ENCODE measurements at regions of chr2 and their contacts with region 1.

Region 1: DNA sequence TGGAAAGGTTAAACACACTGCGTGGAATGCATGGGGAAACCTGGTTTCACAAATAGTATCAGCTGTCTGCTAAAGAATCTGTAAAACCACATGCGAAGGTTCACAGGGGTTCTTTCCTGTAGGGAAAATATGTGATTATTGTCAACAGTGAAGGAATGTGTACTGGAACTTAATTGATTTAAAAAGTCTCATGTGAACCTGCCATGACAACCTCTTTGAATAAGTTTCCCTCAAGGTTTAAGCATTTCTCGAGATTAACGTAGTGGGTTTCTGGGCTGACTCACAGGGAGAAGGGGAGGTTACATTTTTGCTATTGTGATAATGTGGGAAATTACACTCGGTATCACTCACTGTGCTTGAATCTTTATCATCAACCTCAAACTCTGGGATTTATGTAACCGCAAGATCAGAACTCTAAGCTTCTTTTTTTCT is 28.2 kb upstream of the IL1R1 start:
- DNase-seq: peak; percentile 57
- H3K4me3 Mint-ChIP-seq: no peak overlapping the region
- H3K27ac Mint-ChIP-seq: peak overlapping the region; percentile 54
- H3K4me1 Mint-ChIP-seq: peaks cover 62% of the 10 kb centered on the region
- H3K27me3 Mint-ChIP-seq: no peaks in the 10 kb centered on the region

Region 2: DNA sequence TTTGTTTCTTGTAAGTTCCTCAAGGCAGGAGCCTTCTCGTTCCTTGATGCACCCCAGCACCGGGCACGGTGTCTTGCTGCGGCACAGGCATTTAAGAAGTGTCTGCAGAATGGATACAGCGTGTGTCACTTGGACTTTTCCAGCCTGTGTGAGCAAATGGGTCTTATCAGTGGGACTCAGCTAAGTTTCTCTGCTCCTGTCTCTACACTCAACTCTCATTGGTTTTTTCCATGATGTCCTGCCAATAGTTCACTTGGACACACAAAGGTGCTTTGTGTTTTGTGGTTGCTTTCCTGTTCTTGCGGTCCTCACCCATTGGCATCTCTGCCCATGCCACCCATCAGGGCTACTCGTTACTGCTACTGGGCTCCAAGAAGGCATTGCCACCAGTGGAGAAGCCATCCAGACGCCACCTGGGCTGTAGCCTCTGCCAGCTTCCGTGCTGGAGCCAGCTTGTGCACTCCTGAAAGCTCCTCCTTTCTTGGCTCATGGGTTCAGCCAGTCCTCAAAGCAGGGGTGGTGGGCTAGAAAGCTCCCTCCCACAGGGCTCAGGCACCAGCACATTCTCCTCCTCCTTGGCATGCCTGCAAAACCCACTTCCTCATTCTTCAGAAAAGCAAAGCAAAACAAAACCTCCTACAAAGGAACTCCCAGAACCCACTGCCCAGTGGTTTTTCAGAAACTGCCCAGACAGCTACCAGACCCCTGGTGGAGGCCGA is 81.1 kb before region 1 on chr2:
- CTCF ChIA-PET with region 1: no interaction called
- intact Hi-C with region 1: loop called (anchors 1 kb)
- DNase-seq: peak; percentile 22
- H3K4me3 Mint-ChIP-seq: no peak overlapping the region
- H3K27ac Mint-ChIP-seq: peak overlapping the region; percentile 48
- H3K4me1 Mint-ChIP-seq: peaks cover 40% of the 10 kb centered on the region
- H3K27me3 Mint-ChIP-seq: no peaks in the 10 kb centered on the region

Region 3: DNA sequence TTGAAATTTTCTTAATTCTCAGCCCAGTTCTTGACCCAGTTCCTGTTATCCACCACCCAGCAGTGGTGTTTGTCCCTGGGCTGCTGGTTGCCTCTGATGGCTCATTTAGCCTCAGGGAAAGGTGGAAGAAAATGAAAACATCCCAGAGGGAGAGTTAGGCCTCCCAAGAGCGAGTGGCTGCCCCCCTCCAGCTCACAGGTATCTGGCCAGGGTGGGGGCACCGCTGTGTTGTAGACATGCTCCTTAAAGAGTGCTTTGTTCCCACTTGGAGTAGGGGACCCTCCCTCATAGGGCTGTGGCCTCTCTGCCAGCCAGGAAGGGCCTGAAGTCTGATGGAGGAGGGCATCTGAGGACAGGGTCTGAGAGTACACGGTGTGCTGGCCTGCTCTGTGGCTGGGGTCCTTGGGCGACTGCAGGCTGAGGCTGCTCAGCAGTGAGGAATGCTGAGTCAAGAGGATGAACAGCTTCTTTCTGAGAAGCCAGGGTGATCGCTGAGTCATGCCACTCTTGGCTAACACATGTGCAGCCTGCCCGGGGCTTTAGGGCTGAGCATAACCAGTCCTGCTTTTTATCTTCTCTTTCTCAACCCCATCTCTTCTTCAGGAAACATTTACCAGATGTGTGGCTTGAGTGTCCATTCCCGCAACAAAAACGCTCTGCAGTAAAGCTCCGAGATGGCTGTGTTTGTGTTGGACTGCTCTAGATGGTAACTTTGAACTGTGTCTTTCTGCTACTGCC is 50.2 kb before region 1 on chr2:
- CTCF ChIA-PET with region 1: no interaction called
- intact Hi-C with region 1: loop called (anchors 1 kb)
- DNase-seq: peak; percentile 73
- H3K4me3 Mint-ChIP-seq: no peak overlapping the region
- H3K27ac Mint-ChIP-seq: peak overlapping the region; percentile 44
- H3K4me1 Mint-ChIP-seq: peaks cover 27% of the 10 kb centered on the region
- H3K27me3 Mint-ChIP-seq: no peaks in the 10 kb centered on the region

Region 4: GRCh38 chr2:102103992-102104871 is 10.1 kb before region 1 on chr2:
- CTCF ChIA-PET with region 1: no interaction called
- intact Hi-C with region 1: loop called (anchors 1 kb)
- DNase-seq: peak; percentile 96
- H3K4me3 Mint-ChIP-seq: peak overlapping the region; percentile 71
- H3K27ac Mint-ChIP-seq: peak overlapping the region; percentile 86
- H3K4me1 Mint-ChIP-seq: peaks cover 36% of the 10 kb centered on the region
- H3K27me3 Mint-ChIP-seq: peaks cover 2% of the 10 kb centered on the region

Region 5: DNA sequence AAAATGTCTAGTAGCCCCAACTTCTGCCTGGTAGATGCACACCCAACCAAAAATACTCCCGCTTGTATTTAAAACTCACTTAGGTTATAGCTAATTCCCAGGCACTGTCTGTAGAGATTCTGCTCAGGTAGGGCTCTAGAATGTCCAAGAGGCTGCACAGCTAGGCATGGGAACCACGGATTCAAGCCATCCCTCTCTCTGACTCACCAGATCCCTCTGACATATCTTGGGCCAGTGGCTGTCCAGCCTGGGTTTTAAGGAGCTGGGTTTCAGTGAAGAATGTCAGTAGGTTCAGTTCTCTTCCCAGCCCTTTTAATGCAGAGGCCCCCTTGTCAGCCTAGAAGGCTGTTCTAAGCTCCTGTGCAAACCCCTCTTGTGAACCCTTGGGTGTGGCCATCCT is 12.3 kb after region 1 on chr2:
- CTCF ChIA-PET with region 1: interaction called, 4 read pairs
- intact Hi-C with region 1: loop called (anchors 1 kb)
- DNase-seq: no peak
- H3K4me3 Mint-ChIP-seq: no peak overlapping the region
- H3K27ac Mint-ChIP-seq: peak overlapping the region; percentile 81
- H3K4me1 Mint-ChIP-seq: peaks cover 31% of the 10 kb centered on the region
- H3K27me3 Mint-ChIP-seq: peaks cover 3% of the 10 kb centered on the region

Region 6: DNA sequence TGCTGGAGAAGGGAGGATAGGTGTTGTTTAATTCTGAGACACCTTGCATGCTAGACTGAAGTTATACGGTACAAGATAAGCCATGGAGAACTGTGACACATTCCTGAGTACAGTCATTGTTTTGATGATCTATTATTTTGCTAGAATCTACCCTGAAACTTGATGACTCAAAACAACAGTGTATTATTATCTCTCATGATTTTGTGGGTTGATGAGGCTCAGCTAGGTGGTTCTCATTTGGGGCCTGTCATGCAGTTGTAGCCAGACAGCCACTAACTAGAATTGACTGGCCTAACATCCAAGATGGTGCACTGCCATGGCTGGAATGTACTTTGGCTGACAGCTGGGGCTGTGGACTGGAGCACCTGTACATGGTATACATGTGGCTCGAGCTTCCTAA is 22.8 kb after region 1 on chr2:
- CTCF ChIA-PET with region 1: interaction called, 3 read pairs
- intact Hi-C with region 1: loop called (anchors 1 kb)
- DNase-seq: peak; percentile 72
- H3K4me3 Mint-ChIP-seq: no peak overlapping the region
- H3K27ac Mint-ChIP-seq: peak overlapping the region; percentile 62
- H3K4me1 Mint-ChIP-seq: peaks cover 39% of the 10 kb centered on the region
- H3K27me3 Mint-ChIP-seq: peaks cover 26% of the 10 kb centered on the region

Region 7: DNA sequence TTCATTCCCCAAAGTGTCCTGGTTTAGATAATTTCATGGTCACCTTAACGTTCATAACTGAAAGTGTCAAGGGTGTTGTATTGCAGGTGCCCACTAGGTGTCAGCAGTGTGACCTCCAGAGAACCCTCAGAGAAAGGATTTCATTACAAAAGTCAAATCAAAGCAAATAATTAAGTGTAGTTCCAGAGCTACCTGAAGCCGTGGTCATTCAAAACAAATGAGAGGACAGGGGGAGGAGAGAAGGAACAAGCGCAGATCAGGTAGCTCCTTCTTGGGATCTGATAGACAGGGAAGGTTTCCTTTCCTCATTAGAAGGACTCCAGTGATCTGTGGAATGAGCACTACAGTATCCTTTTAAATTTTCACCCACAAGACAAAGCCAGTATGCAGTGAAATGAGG is 358.7 kb after region 1 on chr2 and contains the start of gene SLC9A4:
- CTCF ChIA-PET with region 1: no interaction called
- intact Hi-C with region 1: no loop called
- DNase-seq: peak; percentile 79
- H3K4me3 Mint-ChIP-seq: no peak within 1 kb of the TSS
- H3K27ac Mint-ChIP-seq: no peak within 1 kb of the TSS
- H3K4me1 Mint-ChIP-seq: no peaks in the 10 kb centered on the region
- H3K27me3 Mint-ChIP-seq: peaks cover 24% of the 10 kb centered on the region
- total RNA-seq, gene SLC9A4: 0.07 to 0.10 TPM